ENCODE measurements at regions of chr18 and their contacts with region 1.

Region 1: DNA sequence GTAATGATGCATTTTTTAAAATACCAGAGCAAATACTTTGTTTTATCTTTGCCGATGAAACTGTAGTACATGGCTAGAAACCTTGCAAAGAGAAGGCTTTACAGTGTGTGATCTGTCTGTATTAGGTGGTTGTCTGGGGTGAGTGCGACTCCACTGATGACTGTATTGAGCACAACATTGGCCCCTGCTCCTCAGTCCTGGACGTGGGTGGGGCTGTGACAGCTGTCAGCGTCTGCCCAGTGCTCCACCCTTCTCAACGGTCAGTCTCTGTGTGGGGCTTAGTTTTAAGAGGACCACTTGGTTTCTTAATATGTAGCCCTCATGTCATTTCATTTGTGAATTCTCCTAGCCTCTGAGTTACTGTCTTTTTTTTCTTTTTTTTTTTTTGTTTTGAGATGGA is 17.4 kb upstream of the MOCOS start:
- DNase-seq: no peak
- ATAC-seq: no peak
- H3K4me3 ChIP-seq: no peak overlapping the region
- H3K4me3 Mint-ChIP-seq: no peak overlapping the region
- H3K27ac ChIP-seq: no peak overlapping the region
- H3K27ac Mint-ChIP-seq: no peak overlapping the region
- H3K4me1 ChIP-seq: no peaks in the 10 kb centered on the region
- H3K4me1 Mint-ChIP-seq: no peaks in the 10 kb centered on the region
- H3K27me3 ChIP-seq: no peaks in the 10 kb centered on the region
- H3K27me3 Mint-ChIP-seq: no peaks in the 10 kb centered on the region
- CTCF ChIP-seq: no peak

Region 2: GRCh38 chr18:36139250-36139649 is 30.7 kb before region 1 on chr18:
- CTCF ChIA-PET with region 1: no interaction called
- POLR2A ChIA-PET with region 1: no interaction called
- intact Hi-C with region 1: loop called in 1 of 2 experiments (anchors 5 kb)
- DNase-seq: no peak
- ATAC-seq: no peak
- H3K4me3 ChIP-seq: no peak overlapping the region
- H3K4me3 Mint-ChIP-seq: no peak overlapping the region
- H3K27ac ChIP-seq: no peak overlapping the region
- H3K27ac Mint-ChIP-seq: no peak overlapping the region
- H3K4me1 ChIP-seq: no peaks in the 10 kb centered on the region
- H3K4me1 Mint-ChIP-seq: peaks cover 24% of the 10 kb centered on the region
- H3K27me3 ChIP-seq: no peaks in the 10 kb centered on the region
- H3K27me3 Mint-ChIP-seq: no peaks in the 10 kb centered on the region
- CTCF ChIP-seq: no peak

Region 3: GRCh38 chr18:36321658-36322407 is 151.9 kb after region 1 on chr18:
- CTCF ChIA-PET with region 1: no interaction called
- POLR2A ChIA-PET with region 1: no interaction called
- intact Hi-C with region 1: no loop called
- DNase-seq: no peak
- ATAC-seq: no peak
- H3K4me3 ChIP-seq: no peak overlapping the region
- H3K4me3 Mint-ChIP-seq: no peak overlapping the region
- H3K27ac ChIP-seq: no peak overlapping the region
- H3K27ac Mint-ChIP-seq: no peak overlapping the region
- H3K4me1 ChIP-seq: no peaks in the 10 kb centered on the region
- H3K4me1 Mint-ChIP-seq: no peaks in the 10 kb centered on the region
- H3K27me3 ChIP-seq: no peaks in the 10 kb centered on the region
- H3K27me3 Mint-ChIP-seq: peaks cover 23% of the 10 kb centered on the region
- CTCF ChIP-seq: no peak